ENCODE measurements at regions of chr13 and their contacts with region 1.

Region 1: GRCh38 chr13:30371649-30372265 is 50.5 kb upstream of the UBE2L5 start:
- DNase-seq: peak; percentile 89
- ATAC-seq: peak; percentile 40
- H3K4me3 Mint-ChIP-seq: peak overlapping the region; percentile 76
- H3K27ac Mint-ChIP-seq: peak overlapping the region; percentile 91
- H3K4me1 Mint-ChIP-seq: peaks cover 76% of the 10 kb centered on the region
- H3K27me3 Mint-ChIP-seq: no peaks in the 10 kb centered on the region

Region 2: DNA sequence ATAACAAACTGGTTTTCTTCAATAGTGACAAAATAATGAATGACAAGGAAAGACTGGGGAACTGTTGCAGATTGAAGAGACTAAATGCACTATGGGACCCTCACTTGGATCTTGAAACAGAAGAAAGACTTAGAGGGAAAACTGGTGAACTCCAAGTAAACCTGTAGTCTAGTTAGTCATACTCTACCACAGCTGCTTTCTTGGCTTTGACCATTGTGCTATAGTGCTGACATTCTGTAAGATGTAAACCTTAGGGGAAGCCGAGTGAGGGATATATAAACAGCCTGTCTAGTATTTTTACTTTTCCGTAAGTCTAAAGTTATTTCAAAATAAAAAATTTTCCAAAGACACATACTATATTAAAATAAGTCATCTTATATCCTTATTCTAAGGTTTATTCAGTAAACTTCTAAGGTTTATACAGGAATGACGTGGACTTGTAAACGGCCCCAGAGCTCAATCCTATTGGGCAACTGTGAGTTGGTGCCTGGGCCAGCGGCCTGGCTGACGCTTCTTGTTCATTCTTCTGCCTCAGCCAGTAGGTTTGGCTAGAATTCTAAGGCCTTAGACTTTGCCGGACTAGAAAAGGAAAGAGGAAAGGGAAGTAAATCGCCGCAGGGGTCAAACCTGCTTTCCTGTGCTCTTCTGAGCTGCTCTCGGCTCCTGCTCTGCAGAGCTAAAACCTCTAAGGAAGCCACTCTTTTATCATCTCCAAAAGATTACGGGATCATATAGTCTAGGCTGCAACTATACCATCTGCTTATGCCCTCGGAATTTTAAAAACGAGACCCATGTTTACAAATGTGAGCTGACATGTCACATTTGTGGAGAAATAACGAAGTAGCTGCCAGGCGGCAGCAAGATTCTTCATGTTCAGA is 16.9 kb after region 1 on chr13:
- CTCF ChIA-PET with region 1: interaction called, 83 read pairs
- DNase-seq: no peak
- ATAC-seq: no peak
- H3K4me3 Mint-ChIP-seq: peak overlapping the region; percentile 9
- H3K27ac Mint-ChIP-seq: peak overlapping the region; percentile 44
- H3K4me1 Mint-ChIP-seq: peaks cover 21% of the 10 kb centered on the region
- H3K27me3 Mint-ChIP-seq: no peaks in the 10 kb centered on the region

Region 3: DNA sequence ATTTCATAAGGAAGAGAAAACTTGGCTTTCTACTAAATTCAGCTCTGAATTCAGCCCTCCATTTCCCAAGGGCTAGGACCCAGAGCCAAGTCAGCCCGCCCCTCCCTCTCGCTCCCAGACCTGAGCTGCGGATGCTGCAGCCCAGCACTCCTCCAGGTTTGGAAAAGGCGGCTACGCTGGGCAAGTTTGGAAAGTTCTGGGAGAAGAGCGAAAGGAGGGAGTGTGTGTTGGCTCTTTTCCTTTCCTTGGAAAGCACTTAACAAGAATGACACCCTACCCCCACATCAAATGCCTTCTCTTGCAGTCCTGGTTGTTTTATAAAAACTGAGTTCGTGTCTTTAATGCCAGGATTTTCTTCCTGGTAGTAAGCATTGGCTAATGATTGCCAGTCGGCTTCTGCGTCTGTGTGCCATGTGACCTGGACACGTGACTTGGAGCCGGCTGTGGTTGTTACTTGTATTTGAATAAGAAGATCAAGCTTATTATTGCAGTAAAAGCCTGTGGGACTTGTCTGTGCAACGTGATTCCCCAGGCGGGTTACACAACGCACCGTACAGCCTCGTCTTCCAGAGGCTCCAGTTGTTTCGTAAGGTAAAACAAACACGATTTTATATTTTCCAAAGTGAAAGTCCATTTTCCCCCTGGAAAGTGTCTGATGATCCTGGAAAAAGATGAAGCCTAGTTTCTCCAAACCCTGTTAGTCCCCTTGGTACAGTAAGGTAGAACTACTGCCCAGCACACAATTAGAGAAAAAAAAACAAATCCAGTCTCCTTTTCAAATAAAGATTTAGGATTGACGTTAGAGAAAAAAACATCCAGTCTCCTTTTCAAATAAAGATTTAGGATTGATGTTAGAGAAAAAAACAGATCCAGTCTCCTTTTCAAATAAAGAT is 23.7 kb after region 1 on chr13:
- CTCF ChIA-PET with region 1: interaction called, 83 read pairs
- DNase-seq: peak; percentile 91
- ATAC-seq: peak; percentile 80
- H3K4me3 Mint-ChIP-seq: peak overlapping the region; percentile 75
- H3K27ac Mint-ChIP-seq: peak overlapping the region; percentile 98
- H3K4me1 Mint-ChIP-seq: peaks cover 27% of the 10 kb centered on the region
- H3K27me3 Mint-ChIP-seq: no peaks in the 10 kb centered on the region

Measured in activated CD8-positive, alpha-beta memory T cell treated with anti-CD3 and anti-CD28 coated beads, Interleukin-2, amount 10 ng/mL, durations not matched to agents 7 days and 5 days (primary cell).